PC-3 (cell line): ENCODE measurements at regions of chr4 and their contacts with region 1.

Region 1: DNA sequence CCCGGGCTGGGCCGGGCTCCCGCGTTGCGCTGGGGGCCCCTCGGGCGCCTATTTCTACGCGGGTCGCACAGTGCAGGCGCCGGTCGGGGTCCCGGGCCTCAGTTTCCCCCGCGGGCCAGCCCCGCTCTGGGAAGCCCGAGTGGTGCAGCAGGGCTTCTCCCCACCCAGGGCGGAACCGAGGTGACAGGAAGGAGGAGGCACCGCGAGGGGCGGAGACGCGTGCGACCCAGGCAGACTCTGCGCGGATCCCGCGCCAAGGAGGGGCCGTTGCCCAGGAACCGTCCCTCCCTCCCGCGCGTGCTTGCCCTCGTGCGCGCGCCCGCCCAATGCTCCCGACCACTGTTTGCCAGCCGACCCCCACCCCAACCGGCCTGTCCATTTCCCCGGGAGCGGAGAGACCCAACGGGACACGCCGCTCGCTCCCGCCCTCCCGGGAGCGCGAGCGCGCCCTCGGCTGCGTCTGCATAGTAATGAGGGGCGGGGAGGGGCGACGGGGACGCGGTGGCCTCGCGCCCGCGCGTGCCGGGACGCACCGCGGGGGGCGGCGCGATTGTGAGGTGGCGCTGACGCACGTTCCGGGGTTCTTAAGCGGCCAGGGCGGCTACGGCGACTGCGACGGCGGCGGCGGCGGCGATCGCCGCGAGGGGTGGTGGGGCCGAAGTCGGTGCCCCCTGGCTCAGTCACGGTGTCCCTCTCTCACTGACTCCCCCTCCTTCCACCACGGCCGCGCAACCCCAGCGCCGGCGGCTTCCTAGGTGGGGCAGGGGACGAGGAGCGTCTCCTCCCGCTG is at the start of gene CPEB2:
- DNase-seq: peak; percentile 88
- ATAC-seq: peak; percentile 65
- H3K4me3 ChIP-seq: peak within 1 kb of the TSS; percentile 96
- H3K27ac ChIP-seq: peak within 1 kb of the TSS; percentile 83
- H3K4me1 ChIP-seq: peaks cover 17% of the 10 kb centered on the region; the same call in 1 of the 2 replicates
- H3K27me3 ChIP-seq: no peaks in the 10 kb centered on the region
- CTCF ChIP-seq: no peak
- total RNA-seq, gene CPEB2: 1.8 and 2.4 TPM in 2 replicates

Region 2: GRCh38 chr4:14749910-14750309 is 252.2 kb before region 1 on chr4:
- CTCF ChIA-PET with region 1: interaction called, 3 read pairs
- POLR2A ChIA-PET with region 1: no interaction called
- intact Hi-C with region 1: loop called (anchors 1 kb)
- DNase-seq: peak; percentile 60
- ATAC-seq: peak; percentile 73
- H3K4me3 ChIP-seq: no peak overlapping the region
- H3K27ac ChIP-seq: no peak overlapping the region
- H3K4me1 ChIP-seq: no peaks in the 10 kb centered on the region
- H3K27me3 ChIP-seq: no peaks in the 10 kb centered on the region
- CTCF ChIP-seq: peak; percentile 69

Region 3: GRCh38 chr4:14827111-14827510 is 175.0 kb before region 1 on chr4:
- CTCF ChIA-PET with region 1: no interaction called
- POLR2A ChIA-PET with region 1: no interaction called
- intact Hi-C with region 1: no loop called
- DNase-seq: no peak
- ATAC-seq: no peak
- H3K4me3 ChIP-seq: no peak overlapping the region
- H3K27ac ChIP-seq: no peak overlapping the region
- H3K4me1 ChIP-seq: no peaks in the 10 kb centered on the region
- H3K27me3 ChIP-seq: no peaks in the 10 kb centered on the region
- CTCF ChIP-seq: no peak

Region 4: GRCh38 chr4:14888790-14889572 is 113.1 kb before region 1 on chr4:
- CTCF ChIA-PET with region 1: no interaction called
- POLR2A ChIA-PET with region 1: no interaction called
- intact Hi-C with region 1: loop called (anchors 10 kb)
- DNase-seq: no peak
- ATAC-seq: no peak
- H3K4me3 ChIP-seq: no peak overlapping the region
- H3K27ac ChIP-seq: no peak overlapping the region
- H3K4me1 ChIP-seq: no peaks in the 10 kb centered on the region
- H3K27me3 ChIP-seq: no peaks in the 10 kb centered on the region
- CTCF ChIP-seq: no peak

Region 5: GRCh38 chr4:15162465-15163283 is 160.6 kb after region 1 on chr4:
- CTCF ChIA-PET with region 1: no interaction called
- POLR2A ChIA-PET with region 1: no interaction called
- intact Hi-C with region 1: loop called (anchors 5 kb)
- DNase-seq: peak; percentile 36
- ATAC-seq: peak; percentile 58
- H3K4me3 ChIP-seq: no peak overlapping the region
- H3K27ac ChIP-seq: no peak overlapping the region
- H3K4me1 ChIP-seq: peaks cover 17% of the 10 kb centered on the region
- H3K27me3 ChIP-seq: no peaks in the 10 kb centered on the region
- CTCF ChIP-seq: peak; percentile 60